Naive thymus-derived CD4-positive, alpha-beta T cell (primary cell): ENCODE measurements at regions of chr12 and their contacts with region 1.

Region 1: DNA sequence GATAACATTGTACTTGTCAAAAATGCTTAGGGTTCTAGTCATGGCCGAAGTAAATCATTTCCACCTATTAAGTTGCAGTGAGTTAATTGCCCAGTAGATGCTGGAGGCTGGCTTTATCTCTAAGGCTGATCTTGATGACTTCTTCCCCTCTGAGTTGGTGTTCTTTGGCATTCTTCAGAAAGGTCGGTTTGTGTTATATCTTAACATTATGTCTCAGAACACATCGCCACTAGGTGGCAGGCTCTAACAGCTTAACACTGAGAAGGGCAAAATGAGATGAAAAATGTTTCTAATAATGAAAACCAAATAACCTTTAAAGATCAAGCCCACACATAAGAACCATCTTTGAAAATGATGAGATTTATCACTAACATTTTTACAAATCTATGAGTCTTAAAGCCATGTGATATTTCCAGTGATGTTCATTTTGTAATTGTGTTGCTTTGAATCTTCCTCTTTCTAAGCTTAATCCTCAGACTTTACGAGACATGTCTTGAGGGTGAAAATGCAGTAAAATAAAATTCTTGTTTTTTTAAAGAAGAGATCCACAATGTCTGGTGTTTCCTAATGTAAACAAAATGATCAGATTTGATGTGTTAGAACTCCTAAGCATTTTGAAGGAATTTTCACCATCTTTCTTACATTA is 28.6 kb downstream of the SUDS3 start:
- DNase-seq: peak in 7 of 9 donors; percentile 18 to 42 (median 33)
- ATAC-seq: peak; percentile 72
- H3K4me3 ChIP-seq: no peak overlapping the region
- H3K4me3 Mint-ChIP-seq: no peak overlapping the region
- H3K27ac ChIP-seq: no peak overlapping the region
- H3K27ac Mint-ChIP-seq: no peak overlapping the region
- H3K4me1 ChIP-seq: no peaks in the 10 kb centered on the region
- H3K4me1 Mint-ChIP-seq: peaks cover 0 to 3% (median 0%) of the 10 kb centered on the region in 7 donors
- H3K27me3 ChIP-seq: no peaks in the 10 kb centered on the region
- H3K27me3 Mint-ChIP-seq: no peaks in the 10 kb centered on the region

Region 2: DNA sequence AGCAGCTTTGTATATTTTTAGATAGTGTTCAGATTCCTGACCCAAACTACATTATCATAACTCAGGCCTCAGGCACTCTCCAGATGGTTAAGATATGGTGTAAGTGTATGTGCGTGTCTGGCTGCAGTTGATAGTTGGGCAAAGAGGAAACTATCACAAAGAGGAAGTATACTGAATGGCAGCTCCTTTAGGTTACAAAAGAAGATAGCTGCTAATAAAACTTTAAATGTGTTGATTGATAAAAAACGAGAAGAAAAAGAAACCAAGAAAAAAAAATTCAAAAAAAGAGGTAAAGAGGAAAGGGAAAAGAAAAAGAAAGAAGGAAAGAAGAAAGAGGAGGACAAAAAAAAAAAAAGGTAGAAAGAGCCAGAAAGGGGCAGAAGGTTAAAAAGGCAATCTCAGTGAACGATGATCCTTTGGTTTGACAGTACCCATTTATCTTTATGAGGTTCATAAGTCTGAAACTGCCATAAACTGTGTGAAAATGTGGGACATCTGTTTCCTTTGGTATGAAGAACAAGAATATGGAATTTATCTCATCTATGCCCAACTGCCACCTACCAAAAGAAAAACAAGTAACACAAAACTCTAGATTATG is 74.5 kb before region 1 on chr12:
- CTCF ChIA-PET with region 1: no interaction called
- POLR2A ChIA-PET with region 1: no interaction called
- intact Hi-C with region 1: no loop called
- DNase-seq: no peak
- ATAC-seq: peak; percentile 86
- H3K4me3 ChIP-seq: no peak overlapping the region
- H3K4me3 Mint-ChIP-seq: peak overlapping the region in 7 of 10 donors; percentile 3 to 59 (median 44)
- H3K27ac ChIP-seq: no peak overlapping the region
- H3K27ac Mint-ChIP-seq: peak overlapping the region in 3 of 9 donors; percentile 17 to 70 (median 52)
- H3K4me1 ChIP-seq: no peaks in the 10 kb centered on the region
- H3K4me1 Mint-ChIP-seq: peaks cover 18 to 64% (median 39%) of the 10 kb centered on the region in 7 donors
- H3K27me3 ChIP-seq: no peaks in the 10 kb centered on the region
- H3K27me3 Mint-ChIP-seq: no peaks in the 10 kb centered on the region

Region 3: DNA sequence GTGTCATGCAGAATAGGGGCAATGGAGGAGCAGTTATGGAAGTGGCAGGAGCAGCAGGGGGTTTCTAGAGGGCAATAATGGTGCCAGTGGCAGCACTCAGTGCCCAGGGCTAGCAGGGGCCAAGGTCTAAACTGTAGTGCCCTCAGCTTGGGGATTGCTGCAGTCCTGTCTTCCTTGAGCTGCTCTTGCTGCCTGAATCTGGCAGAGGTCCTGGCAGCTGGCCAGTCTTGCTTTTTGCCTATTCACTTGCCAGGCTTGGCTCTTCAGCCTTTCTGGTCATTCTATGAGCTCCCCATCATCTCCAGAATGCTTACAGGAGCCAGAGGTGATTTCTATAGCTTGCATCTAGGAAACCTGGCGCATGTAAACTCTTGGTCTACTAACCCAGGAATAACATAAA is 43.3 kb after region 1 on chr12:
- CTCF ChIA-PET with region 1: no interaction called
- POLR2A ChIA-PET with region 1: no interaction called
- intact Hi-C with region 1: no loop called
- DNase-seq: no peak
- ATAC-seq: no peak
- H3K4me3 ChIP-seq: no peak overlapping the region
- H3K4me3 Mint-ChIP-seq: no peak overlapping the region
- H3K27ac ChIP-seq: no peak overlapping the region
- H3K27ac Mint-ChIP-seq: no peak overlapping the region
- H3K4me1 ChIP-seq: no peaks in the 10 kb centered on the region
- H3K4me1 Mint-ChIP-seq: no peaks in the 10 kb centered on the region
- H3K27me3 ChIP-seq: no peaks in the 10 kb centered on the region
- H3K27me3 Mint-ChIP-seq: peaks cover 0 to 24% (median 21%) of the 10 kb centered on the region in 5 donors

Region 4: GRCh38 chr12:119036878-119037825 is 632.2 kb after region 1 on chr12:
- CTCF ChIA-PET with region 1: no interaction called
- POLR2A ChIA-PET with region 1: no interaction called
- intact Hi-C with region 1: loop called in 1 of 2 experiments (anchors 5 kb)
- DNase-seq: no peak
- ATAC-seq: no peak
- H3K4me3 ChIP-seq: no peak overlapping the region
- H3K4me3 Mint-ChIP-seq: no peak overlapping the region
- H3K27ac ChIP-seq: no peak overlapping the region
- H3K27ac Mint-ChIP-seq: no peak overlapping the region
- H3K4me1 ChIP-seq: no peaks in the 10 kb centered on the region
- H3K4me1 Mint-ChIP-seq: no peaks in the 10 kb centered on the region
- H3K27me3 ChIP-seq: no peaks in the 10 kb centered on the region
- H3K27me3 Mint-ChIP-seq: peaks cover 0 to 28% (median 5%) of the 10 kb centered on the region in 5 donors

Region 5: GRCh38 chr12:119334430-119335170 is 929.6 kb after region 1 on chr12 and contains the start of gene CCDC60:
- CTCF ChIA-PET with region 1: no interaction called
- POLR2A ChIA-PET with region 1: no interaction called
- intact Hi-C with region 1: no loop called
- DNase-seq: no peak
- ATAC-seq: no peak
- H3K4me3 ChIP-seq: no peak within 1 kb of the TSS
- H3K4me3 Mint-ChIP-seq: no peak within 1 kb of the TSS
- H3K27ac ChIP-seq: no peak within 1 kb of the TSS
- H3K27ac Mint-ChIP-seq: no peak within 1 kb of the TSS
- H3K4me1 ChIP-seq: no peaks in the 10 kb centered on the region
- H3K4me1 Mint-ChIP-seq: no peaks in the 10 kb centered on the region
- H3K27me3 ChIP-seq: no peaks in the 10 kb centered on the region
- H3K27me3 Mint-ChIP-seq: peaks cover 12 to 36% (median 25%) of the 10 kb centered on the region in 5 donors
- total RNA-seq, gene CCDC60: not detected

Region 6: DNA sequence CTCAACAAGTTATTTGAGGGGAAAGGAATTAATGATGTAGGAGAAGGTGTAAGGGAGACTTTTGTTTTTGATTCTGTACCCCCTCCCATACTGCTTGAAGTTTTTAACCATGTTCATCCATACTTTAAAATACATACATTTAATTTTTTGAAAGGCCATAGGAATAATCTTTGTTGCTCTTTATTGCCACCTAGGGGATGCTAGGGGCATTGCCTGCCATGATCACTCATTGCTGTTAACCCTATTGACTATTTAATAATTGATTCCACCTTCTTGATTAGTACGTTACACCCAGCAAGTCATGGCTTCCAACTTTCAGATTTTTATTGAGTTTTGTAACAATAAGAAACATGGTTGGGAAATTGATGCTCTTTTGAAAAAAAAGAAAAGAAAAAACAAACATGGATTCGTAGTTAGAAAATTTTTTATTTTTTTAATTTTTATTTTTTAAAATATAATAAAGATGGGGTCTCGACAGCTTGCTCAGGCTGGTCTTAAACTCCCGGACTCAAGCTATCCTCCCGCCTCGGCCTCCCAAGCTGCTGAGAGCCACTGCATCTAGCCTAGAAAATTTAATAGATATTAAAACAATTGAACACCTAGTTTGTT is 1254.4 kb after region 1 on chr12:
- CTCF ChIA-PET with region 1: no interaction called
- POLR2A ChIA-PET with region 1: no interaction called
- intact Hi-C with region 1: loop called in 1 of 2 experiments (anchors 2 kb)
- DNase-seq: peak in 6 of 9 donors; percentile 16 to 53 (median 46)
- ATAC-seq: peak; percentile 86
- H3K4me3 ChIP-seq: no peak overlapping the region
- H3K4me3 Mint-ChIP-seq: no peak overlapping the region
- H3K27ac ChIP-seq: no peak overlapping the region
- H3K27ac Mint-ChIP-seq: no peak overlapping the region
- H3K4me1 ChIP-seq: no peaks in the 10 kb centered on the region
- H3K4me1 Mint-ChIP-seq: peaks cover 0 to 10% (median 0%) of the 10 kb centered on the region in 7 donors
- H3K27me3 ChIP-seq: no peaks in the 10 kb centered on the region
- H3K27me3 Mint-ChIP-seq: peaks cover 0 to 13% (median 5%) of the 10 kb centered on the region in 5 donors